Cardiac septum (tissue), 1 donor: ENCODE measurements at regions of chr3 and their contacts with region 1.

Region 1: DNA sequence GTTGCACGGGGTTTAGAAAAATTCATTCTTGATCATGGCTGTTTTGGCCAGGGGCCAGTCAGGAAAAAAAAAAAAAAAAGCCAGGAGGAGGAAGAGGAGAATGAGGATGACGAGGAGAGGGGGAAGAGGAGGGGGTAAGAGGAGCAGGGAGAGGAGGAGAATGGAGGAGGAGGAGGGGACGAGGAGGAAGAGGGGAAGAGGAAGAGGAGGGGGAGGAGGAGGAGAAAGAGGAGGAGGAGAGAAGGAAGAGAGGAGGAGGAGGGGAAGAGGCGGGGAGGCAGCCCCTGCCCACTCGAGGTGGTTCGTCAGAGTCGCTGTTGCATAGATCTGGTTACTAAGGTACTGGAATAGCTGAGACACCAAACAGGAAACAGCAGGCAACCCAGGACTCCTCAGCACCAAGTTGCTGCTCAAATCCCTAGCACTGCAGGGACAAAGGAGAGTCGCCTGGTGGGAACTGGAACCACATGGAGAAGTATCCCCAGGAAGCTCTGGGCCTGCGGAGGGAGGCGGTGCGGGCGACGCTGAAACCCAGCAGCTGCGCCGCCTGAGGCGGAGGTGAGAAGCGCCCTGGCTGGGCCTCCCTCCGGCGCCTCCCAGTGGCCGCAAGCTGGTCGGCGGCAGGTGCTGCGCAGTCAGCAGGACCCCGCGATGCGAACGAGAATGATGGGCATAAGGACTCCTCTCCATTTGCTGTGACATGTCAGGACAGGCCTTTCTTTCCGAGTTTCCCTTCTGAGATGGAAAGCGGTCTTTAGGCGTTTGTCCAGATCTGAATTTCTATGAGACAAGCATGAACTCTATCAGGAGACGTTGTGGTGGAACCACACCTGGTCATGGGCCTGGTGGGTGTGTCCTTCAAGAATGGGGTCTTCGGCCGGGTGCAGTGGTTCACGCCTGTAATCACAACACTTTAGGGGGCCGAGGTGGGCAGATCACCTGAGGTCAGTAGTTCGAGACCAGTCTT is 17.5 kb downstream of the FAM240A start:
- DNase-seq: peak; percentile 81

Region 2: GRCh38 chr3:46488735-46489361 is 141.0 kb before region 1 on chr3:
- intact Hi-C with region 1: loop called (anchors 2 kb)
- DNase-seq: peak; percentile 94

Region 3: GRCh38 chr3:46500656-46501635 is 128.9 kb before region 1 on chr3:
- intact Hi-C with region 1: no loop called
- DNase-seq: no peak

Region 4: DNA sequence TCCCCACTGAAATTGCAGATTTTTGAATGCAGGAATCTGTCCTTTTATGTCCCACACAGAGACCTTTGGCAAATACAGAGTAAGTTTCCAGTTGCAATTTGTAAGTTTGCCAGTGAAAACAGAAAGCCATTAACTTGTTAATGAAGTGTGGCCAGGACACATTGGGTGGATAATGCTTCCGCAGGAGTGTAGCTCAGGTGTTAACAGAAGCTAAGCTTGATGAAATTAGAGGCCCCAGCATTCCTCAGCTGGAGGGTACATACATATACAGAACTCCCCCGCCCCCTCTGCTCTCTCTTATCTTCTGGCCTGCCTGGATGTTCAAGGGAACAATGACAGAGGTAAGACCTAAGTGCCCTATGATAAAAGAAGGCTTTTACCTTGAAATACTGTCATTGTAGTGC is 55.6 kb before region 1 on chr3:
- intact Hi-C with region 1: loop called (anchors 5 kb)
- DNase-seq: no peak